ENCODE measurements at regions of chr12 and their contacts with region 1.

Region 1: GRCh38 chr12:90978117-90978770 is 23.3 kb upstream of the CCER1 start:
- DNase-seq: no peak
- H3K4me3 ChIP-seq: no peak overlapping the region
- H3K27ac ChIP-seq: no peak overlapping the region
- H3K4me1 ChIP-seq: no peaks in the 10 kb centered on the region
- H3K27me3 ChIP-seq: no peaks in the 10 kb centered on the region
- CTCF ChIP-seq: peak; percentile 26 to 75 (median 63)
- POLR2A ChIP-seq: no peak

Region 2: GRCh38 chr12:91355150-91356006 is 377.1 kb after region 1 on chr12:
- intact Hi-C with region 1: loop called (anchors 5 kb)
- DNase-seq: peak; percentile 62
- H3K4me3 ChIP-seq: no peak overlapping the region
- H3K27ac ChIP-seq: no peak overlapping the region
- H3K4me1 ChIP-seq: no peaks in the 10 kb centered on the region
- H3K27me3 ChIP-seq: no peaks in the 10 kb centered on the region
- CTCF ChIP-seq: peak; percentile 58 to 81 (median 74)
- POLR2A ChIP-seq: no peak

Region 3: DNA sequence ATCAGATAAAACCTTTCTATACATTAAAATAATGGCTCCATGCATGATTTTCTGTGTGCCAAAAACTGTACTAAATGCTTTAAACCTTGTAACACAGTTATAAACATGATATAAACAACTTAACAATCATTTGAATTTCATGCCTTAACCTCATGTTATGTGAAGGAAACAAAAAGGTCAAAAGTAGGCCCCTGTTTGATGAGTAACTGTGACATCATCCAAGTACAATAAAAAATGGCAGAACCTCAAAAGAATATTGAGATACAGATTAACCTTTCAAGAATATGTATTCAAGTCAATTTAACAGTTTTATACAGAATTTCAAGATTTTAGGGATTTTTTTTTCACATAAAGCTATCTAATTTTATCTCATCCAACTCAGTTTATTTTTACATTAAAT is 515.1 kb after region 1 on chr12:
- intact Hi-C with region 1: no loop called
- DNase-seq: no peak
- H3K4me3 ChIP-seq: no peak overlapping the region
- H3K27ac ChIP-seq: no peak overlapping the region
- H3K4me1 ChIP-seq: no peaks in the 10 kb centered on the region
- H3K27me3 ChIP-seq: no peaks in the 10 kb centered on the region
- CTCF ChIP-seq: no peak
- POLR2A ChIP-seq: no peak